Activated naive CD4-positive, alpha-beta T cell treated with anti-CD3 and anti-CD28 coated beads for 36 hours (primary cell): ENCODE measurements at regions of chr4 and their contacts with region 1.

Region 1: GRCh38 chr4:121900132-121900983 is 30.1 kb upstream of the BBS7 start:
- DNase-seq: peak; percentile 79
- H3K4me3 Mint-ChIP-seq: no peak overlapping the region
- H3K27ac Mint-ChIP-seq: no peak overlapping the region
- H3K4me1 Mint-ChIP-seq: peaks cover 10% of the 10 kb centered on the region
- H3K27me3 Mint-ChIP-seq: no peaks in the 10 kb centered on the region

Region 2: GRCh38 chr4:121829511-121829910 is 70.8 kb before region 1 on chr4:
- CTCF ChIA-PET with region 1: no interaction called
- intact Hi-C with region 1: no loop called
- DNase-seq: no peak
- H3K4me3 Mint-ChIP-seq: no peak overlapping the region
- H3K27ac Mint-ChIP-seq: no peak overlapping the region
- H3K4me1 Mint-ChIP-seq: peaks cover 2% of the 10 kb centered on the region
- H3K27me3 Mint-ChIP-seq: no peaks in the 10 kb centered on the region

Region 3: DNA sequence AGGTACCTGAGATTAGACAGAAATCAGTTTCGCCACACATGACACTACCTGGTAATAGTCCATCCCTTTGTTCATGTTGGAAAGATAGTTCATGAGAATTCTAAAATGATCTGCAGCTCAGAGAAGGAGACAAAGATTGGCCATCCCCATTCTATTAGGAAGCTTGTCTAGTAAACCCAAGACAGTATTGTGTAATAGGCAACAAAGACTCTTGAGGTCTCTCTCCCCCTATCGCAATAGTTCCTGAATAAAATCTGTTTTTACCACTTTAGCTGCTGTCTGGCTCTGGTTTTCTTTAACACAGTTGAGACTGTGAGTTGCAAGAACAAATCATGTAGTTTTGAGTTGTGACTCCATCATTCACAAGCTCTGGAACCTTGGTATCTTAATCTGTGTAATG is 15.2 kb before region 1 on chr4:
- CTCF ChIA-PET with region 1: interaction called, 10 read pairs
- intact Hi-C with region 1: no loop called
- DNase-seq: no peak
- H3K4me3 Mint-ChIP-seq: no peak overlapping the region
- H3K27ac Mint-ChIP-seq: no peak overlapping the region
- H3K4me1 Mint-ChIP-seq: peaks cover 5% of the 10 kb centered on the region
- H3K27me3 Mint-ChIP-seq: peaks cover 24% of the 10 kb centered on the region

Region 4: GRCh38 chr4:121950212-121950679 is 49.9 kb after region 1 on chr4:
- CTCF ChIA-PET with region 1: interaction called, 13 read pairs
- intact Hi-C with region 1: loop called (anchors 1 kb)
- DNase-seq: peak; percentile 92
- H3K4me3 Mint-ChIP-seq: peak overlapping the region; percentile 86
- H3K27ac Mint-ChIP-seq: no peak overlapping the region
- H3K4me1 Mint-ChIP-seq: peaks cover 5% of the 10 kb centered on the region
- H3K27me3 Mint-ChIP-seq: peaks cover 32% of the 10 kb centered on the region

Region 5: DNA sequence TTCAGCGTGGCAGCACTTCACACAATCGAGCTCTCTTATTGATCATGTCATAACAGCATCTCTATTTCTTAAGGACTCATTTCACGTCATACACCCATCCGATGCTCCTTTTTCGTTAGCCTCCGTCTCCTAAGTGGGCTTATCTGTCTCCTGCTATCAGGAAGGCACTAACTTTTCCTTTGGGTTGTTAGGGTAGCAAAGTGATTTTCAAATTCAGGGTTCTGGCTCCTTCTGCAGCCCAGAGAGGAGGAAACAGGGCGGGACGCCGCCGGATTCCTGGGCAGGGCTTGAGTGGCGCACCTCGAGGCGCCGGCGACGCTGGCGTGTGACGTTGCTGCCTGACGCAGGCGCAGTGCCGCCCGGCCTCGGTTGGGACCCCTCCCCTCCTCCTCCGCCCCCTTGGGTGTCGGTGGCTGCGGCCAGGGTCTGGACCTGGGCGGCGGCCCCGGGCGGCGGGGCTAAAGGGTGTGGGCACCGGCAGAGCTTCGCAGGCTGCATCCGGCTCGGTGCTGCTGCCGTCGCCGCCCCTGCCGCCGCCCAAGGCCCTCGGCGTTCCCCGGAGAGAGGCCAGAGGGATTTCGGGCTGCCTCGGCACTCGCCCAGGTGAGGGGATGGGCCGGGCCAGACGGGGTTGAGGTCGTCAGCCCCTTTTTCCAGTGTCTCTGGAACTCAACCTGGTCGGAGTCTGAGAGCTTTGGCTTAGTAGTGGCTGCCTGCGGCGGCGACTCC is 251.8 kb after region 1 on chr4 and contains the start of gene BLTP1:
- CTCF ChIA-PET with region 1: interaction called, 8 read pairs
- intact Hi-C with region 1: loop called (anchors 5 kb)
- DNase-seq: peak; percentile 88
- H3K4me3 Mint-ChIP-seq: peak within 1 kb of the TSS; percentile 95
- H3K27ac Mint-ChIP-seq: peak within 1 kb of the TSS; percentile 96
- H3K4me1 Mint-ChIP-seq: peaks cover 52% of the 10 kb centered on the region
- H3K27me3 Mint-ChIP-seq: no peaks in the 10 kb centered on the region
- total RNA-seq, gene BLTP1: 20.5 to 23.6 TPM

Region 6: GRCh38 chr4:122309988-122310626 is 409.7 kb after region 1 on chr4:
- CTCF ChIA-PET with region 1: interaction called, 3 read pairs
- intact Hi-C with region 1: loop called (anchors 2 kb)
- DNase-seq: no peak
- H3K4me3 Mint-ChIP-seq: no peak overlapping the region
- H3K27ac Mint-ChIP-seq: peak overlapping the region; percentile 57
- H3K4me1 Mint-ChIP-seq: peaks cover 8% of the 10 kb centered on the region
- H3K27me3 Mint-ChIP-seq: no peaks in the 10 kb centered on the region

Region 7: GRCh38 chr4:122652379-122652778 is 752.0 kb after region 1 on chr4:
- CTCF ChIA-PET with region 1: no interaction called
- intact Hi-C with region 1: loop called (anchors 5 kb)
- DNase-seq: peak; percentile 88
- H3K4me3 Mint-ChIP-seq: no peak overlapping the region
- H3K27ac Mint-ChIP-seq: peak overlapping the region; percentile 31
- H3K4me1 Mint-ChIP-seq: peaks cover 13% of the 10 kb centered on the region
- H3K27me3 Mint-ChIP-seq: no peaks in the 10 kb centered on the region

Region 8: DNA sequence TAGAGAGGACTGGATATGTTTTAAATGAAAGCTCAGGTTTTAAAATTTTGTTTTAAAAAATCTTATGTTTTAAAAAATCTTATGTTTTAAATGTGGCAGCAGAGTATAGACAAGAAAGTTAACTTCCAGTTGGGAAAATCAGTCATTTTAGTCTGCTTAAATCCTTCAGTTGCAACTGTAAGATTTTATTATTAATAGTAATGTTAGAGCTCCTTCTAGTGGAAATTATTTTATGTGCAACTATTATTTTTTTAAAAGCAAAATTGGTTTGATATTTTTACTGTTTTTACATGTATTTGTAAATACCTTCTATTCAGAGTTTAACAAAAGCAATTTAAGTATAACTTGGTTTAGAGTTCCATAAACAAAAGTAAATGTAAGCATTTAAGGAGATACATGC is 1030.5 kb after region 1 on chr4:
- CTCF ChIA-PET with region 1: no interaction called
- intact Hi-C with region 1: loop called (anchors 5 kb)
- DNase-seq: no peak
- H3K4me3 Mint-ChIP-seq: no peak overlapping the region
- H3K27ac Mint-ChIP-seq: no peak overlapping the region
- H3K4me1 Mint-ChIP-seq: peaks cover 4% of the 10 kb centered on the region
- H3K27me3 Mint-ChIP-seq: no peaks in the 10 kb centered on the region